ENCODE measurements at regions of chr15 and their contacts with region 1.

Region 1: DNA sequence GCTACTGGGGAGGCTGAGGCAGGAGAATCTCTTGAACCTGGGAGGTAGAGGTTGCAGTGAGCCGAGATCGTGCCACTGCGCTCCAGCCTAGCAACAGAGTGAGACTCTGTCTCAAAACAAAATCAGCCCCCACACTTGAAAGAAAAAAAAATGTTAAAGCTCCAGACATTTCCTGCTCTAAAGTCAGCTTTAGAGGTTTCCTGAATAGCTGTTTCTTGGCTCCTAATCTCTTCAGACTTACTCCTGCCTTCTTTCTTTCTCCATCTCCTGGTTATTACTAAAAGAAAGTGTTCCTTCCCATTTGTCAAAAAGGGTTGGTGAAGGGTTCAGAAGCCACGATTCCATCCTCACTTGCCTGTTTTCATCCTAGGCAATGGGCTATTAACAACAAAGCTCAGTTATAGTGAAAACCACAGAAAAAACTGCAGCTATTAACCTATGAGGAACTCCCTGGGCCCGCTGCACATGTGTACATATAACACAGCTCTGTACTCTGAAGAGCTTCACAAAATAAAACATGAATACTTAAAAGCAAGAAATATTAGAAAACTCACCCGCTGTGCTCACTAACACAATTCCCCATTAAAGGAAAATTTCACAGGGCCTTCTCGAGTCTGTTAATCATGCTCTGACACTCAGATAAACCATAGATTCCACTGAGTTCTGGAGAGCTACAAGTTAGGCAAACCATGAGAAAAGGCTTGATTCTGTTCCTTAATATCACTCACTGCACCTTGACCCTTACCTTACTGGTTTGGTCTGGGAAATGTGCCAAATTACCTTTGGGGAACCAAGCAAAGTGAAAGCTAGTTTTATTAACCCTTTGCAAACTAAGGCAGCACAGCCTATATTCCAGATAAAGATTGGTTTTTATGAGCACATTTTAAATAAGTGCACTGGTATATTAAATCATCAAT is 89.9 kb upstream of the TSPAN3 start:
- DNase-seq: no peak
- ATAC-seq: peak; percentile 57
- H3K4me3 Mint-ChIP-seq: peak overlapping the region; percentile 8
- H3K27ac Mint-ChIP-seq: peak overlapping the region; percentile 47
- H3K4me1 Mint-ChIP-seq: peaks cover 38% of the 10 kb centered on the region
- H3K27me3 Mint-ChIP-seq: no peaks in the 10 kb centered on the region

Region 2: DNA sequence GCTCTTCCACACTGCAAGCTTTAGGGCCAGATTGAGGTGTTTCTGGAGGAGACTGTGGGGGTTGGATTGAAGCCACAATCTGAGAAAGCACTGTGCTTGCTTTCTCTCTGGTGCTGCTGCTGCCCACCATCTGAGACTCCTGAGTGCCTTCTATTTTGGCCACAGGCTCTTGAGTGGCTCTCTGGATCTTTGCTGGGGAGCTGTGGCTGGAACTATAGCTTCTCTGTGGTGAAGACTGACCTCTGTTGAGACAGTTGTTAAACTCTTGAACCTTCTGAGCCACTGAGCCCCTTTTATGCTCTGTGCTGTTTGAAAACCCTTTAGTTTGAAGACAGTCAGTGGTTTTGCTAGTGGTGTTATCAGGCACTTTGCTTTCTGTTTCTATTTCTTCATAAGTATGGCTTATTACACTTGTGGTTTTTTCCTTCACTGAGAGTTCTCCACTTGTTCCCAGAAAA is 18.8 kb after region 1 on chr15:
- CTCF ChIA-PET with region 1: interaction called, 19 read pairs
- POLR2A ChIA-PET with region 1: no interaction called
- DNase-seq: peak; percentile 61
- ATAC-seq: peak; percentile 87
- H3K4me3 Mint-ChIP-seq: peak overlapping the region; percentile 60
- H3K27ac Mint-ChIP-seq: peak overlapping the region; percentile 91
- H3K4me1 Mint-ChIP-seq: peaks cover 49% of the 10 kb centered on the region
- H3K27me3 Mint-ChIP-seq: no peaks in the 10 kb centered on the region